GM10248 (cell line): ENCODE measurements at regions of chr15 and their contacts with region 1.

Region 1: GRCh38 chr15:38389924-38390542 is 63.9 kb upstream of the FAM98B start:
- DNase-seq: peak; percentile 48
- CTCF ChIP-seq: peak; percentile 78

Region 2: GRCh38 chr15:38002883-38003477 is 387.1 kb before region 1 on chr15:
- CTCF ChIA-PET with region 1: interaction called, 13 read pairs
- POLR2A ChIA-PET with region 1: no interaction called
- DNase-seq: no peak
- CTCF ChIP-seq: peak; percentile 66

Region 3: GRCh38 chr15:38283010-38283409 is 107.0 kb before region 1 on chr15:
- CTCF ChIA-PET with region 1: no interaction called
- POLR2A ChIA-PET with region 1: no interaction called
- DNase-seq: no peak
- CTCF ChIP-seq: no peak

Region 4: DNA sequence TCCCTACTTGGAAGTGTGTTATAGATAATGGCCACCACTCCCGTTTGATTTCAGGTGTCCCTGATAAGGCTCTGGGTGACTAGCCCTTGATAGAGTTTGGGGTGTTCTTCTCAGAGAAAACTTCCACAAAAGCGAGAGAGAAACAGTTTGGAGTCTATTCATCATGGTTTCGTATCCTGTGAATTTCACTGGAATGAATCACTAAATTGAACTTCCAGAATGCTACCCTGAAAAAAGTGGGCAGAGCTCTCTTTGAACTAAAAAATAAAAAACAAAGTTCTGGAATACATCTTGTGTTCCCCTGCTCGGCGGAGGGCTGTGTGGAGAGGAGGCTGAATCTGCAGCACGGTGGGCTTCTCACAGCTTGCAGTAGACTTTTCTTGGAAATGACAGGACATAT is 11.1 kb after region 1 on chr15:
- CTCF ChIA-PET with region 1: no interaction called
- POLR2A ChIA-PET with region 1: no interaction called
- DNase-seq: no peak
- CTCF ChIP-seq: no peak

Region 5: GRCh38 chr15:39195988-39196486 is 806.0 kb after region 1 on chr15:
- CTCF ChIA-PET with region 1: no interaction called
- POLR2A ChIA-PET with region 1: no interaction called
- DNase-seq: peak; percentile 19
- CTCF ChIP-seq: no peak